ENCODE measurements at regions of chr2 and their contacts with region 1.

Region 1: GRCh38 chr2:191030521-191031154 is 16.7 kb upstream of the STAT1 start:
- DNase-seq: peak; percentile 63
- H3K4me3 ChIP-seq: no peak overlapping the region
- H3K27ac ChIP-seq: no peak overlapping the region
- H3K4me1 ChIP-seq: no peaks in the 10 kb centered on the region
- CTCF ChIP-seq: peak; percentile 85

Region 2: GRCh38 chr2:190328573-190329147 is 702.0 kb before region 1 on chr2:
- CTCF ChIA-PET with region 1: no interaction called
- POLR2A ChIA-PET with region 1: no interaction called
- intact Hi-C with region 1: no loop called
- DNase-seq: no peak
- H3K4me3 ChIP-seq: no peak overlapping the region
- H3K27ac ChIP-seq: no peak overlapping the region
- H3K4me1 ChIP-seq: no peaks in the 10 kb centered on the region
- CTCF ChIP-seq: 0 out of 2 replicates have a peak, but pooled peaks have one; percentile 21

Region 3: DNA sequence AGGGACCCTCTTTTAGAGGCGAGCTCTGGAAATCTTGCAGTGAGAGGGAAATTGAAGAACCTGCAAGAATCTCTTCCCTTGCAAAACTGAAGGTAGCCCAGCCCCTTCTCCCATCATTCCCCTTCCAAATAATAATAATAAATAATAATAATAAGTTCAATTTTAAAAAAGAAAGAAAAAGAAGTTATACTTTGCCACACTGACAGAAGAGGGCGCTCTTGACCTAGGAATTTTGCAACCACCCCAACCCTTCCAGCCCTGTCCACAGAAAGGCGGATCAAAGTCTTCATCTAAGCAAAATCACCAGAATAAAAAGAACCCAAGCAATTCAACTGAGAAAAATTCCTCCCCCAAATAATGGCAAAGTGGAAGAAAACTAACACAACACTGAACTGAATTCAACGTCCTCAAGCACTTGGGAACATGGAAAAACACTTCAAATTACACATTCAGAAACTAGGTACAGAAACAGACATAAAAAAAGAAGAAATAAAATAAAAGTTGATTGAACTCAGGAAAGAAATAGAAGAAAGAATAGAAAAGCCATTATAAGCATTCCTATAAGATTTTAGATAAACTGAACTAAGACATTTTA is 248.9 kb before region 1 on chr2:
- CTCF ChIA-PET with region 1: no interaction called
- POLR2A ChIA-PET with region 1: no interaction called
- intact Hi-C with region 1: loop called (anchors 2 kb)
- DNase-seq: peak; percentile 51
- H3K4me3 ChIP-seq: no peak overlapping the region
- H3K27ac ChIP-seq: no peak overlapping the region
- H3K4me1 ChIP-seq: no peaks in the 10 kb centered on the region
- CTCF ChIP-seq: peak; percentile 79

Region 4: DNA sequence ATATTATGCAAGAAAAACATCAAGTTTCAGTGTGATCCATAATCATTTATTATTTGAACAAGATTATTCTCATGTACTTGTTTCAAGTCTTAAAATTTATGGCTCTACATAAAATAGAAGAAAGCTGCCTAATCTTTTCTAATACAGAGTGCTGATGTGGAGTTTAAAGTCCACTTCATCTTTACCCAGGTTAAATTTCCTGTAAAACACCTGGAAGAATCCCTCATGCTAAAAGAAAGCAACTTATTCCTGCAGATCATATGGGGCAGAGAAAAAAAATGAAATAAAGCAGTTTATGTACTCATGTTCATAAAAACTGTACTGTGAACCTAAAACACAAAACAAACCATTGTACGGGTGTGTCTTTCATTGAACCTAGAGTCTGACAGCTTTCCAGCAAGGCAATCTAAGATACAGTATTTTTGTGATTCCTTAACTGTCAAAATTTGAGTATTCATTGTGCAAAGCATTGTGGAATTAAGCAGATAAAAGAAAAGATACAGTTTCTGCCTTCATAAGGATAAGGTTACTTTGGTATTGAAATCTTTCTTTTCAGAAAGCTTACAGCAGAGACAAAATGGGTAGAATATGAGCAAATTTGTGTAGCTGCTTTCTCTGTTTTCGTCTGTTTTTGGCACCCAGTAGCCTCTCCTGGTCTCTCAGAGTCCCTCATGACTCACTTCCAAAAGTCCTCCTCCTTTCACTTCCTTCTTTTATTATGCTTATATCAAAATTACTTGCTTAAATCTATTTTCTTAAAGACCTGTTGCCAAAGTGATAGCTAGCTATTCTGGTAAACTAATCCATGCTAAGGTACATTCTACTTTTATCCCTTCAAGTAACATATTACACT is 176.9 kb before region 1 on chr2:
- CTCF ChIA-PET with region 1: no interaction called
- POLR2A ChIA-PET with region 1: no interaction called
- intact Hi-C with region 1: loop called (anchors 2 kb)
- DNase-seq: no peak
- H3K4me3 ChIP-seq: no peak overlapping the region
- H3K27ac ChIP-seq: no peak overlapping the region
- H3K4me1 ChIP-seq: no peaks in the 10 kb centered on the region
- CTCF ChIP-seq: no peak

Region 5: GRCh38 chr2:190916829-190917228 is 113.8 kb before region 1 on chr2:
- CTCF ChIA-PET with region 1: no interaction called
- POLR2A ChIA-PET with region 1: no interaction called
- intact Hi-C with region 1: no loop called
- DNase-seq: no peak
- H3K4me3 ChIP-seq: no peak overlapping the region
- H3K27ac ChIP-seq: no peak overlapping the region
- H3K4me1 ChIP-seq: no peaks in the 10 kb centered on the region
- CTCF ChIP-seq: no peak

Region 6: DNA sequence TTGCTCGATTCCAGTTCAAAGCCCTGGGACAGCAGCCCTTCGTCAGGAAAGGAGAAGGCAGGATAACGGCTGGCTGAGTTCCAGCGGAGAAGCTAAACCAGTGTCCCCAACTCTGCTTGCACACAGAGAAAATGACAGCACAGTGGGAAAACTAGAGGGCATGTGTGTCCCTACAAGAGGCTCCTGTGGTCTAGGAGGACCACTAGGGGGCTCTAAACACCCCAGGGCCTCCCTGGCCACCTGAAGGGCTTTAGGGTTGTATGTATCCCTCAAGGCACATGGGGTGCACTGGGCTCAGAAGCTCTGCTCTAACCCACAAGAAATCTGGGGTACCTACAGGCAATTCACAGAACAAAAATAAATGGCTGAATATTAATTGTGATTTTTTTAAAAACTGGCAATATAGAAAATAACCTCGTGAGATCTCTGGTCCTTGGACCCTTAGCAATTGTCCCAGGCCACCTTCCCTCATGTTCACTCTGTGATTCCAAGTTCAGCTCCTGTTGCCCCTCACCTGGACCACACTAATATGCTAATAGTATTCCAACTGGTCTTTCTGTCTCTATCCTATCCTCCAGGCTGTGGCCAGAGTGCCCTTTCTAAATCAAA is 34.2 kb before region 1 on chr2:
- CTCF ChIA-PET with region 1: no interaction called
- POLR2A ChIA-PET with region 1: no interaction called
- intact Hi-C with region 1: loop called (anchors 1 kb)
- DNase-seq: peak; percentile 55
- H3K4me3 ChIP-seq: no peak overlapping the region
- H3K27ac ChIP-seq: no peak overlapping the region
- H3K4me1 ChIP-seq: no peaks in the 10 kb centered on the region
- CTCF ChIP-seq: peak; percentile 86

Measured in OCI-LY7 (cell line).